H1 (cell line): ENCODE measurements at regions of chr12 and their contacts with region 1.

Region 1: GRCh38 chr12:26651566-26652188 is 181.3 kb downstream of the ITPR2 start:
- DNase-seq: peak; percentile 59 to 93
- H3K4me3 ChIP-seq: no peak overlapping the region
- H3K27ac ChIP-seq: no peak overlapping the region
- H3K4me1 ChIP-seq: peaks cover 0 to 1% (median 0%) of the 10 kb centered on the region in 4 experiments; a peak in 1 of 7 replicates
- H3K27me3 ChIP-seq: no peaks in the 10 kb centered on the region
- CTCF ChIP-seq: peak; percentile 14 to 85 (median 83)
- EP300 ChIP-seq: no peak
- POLR2A ChIP-seq: no peak
- RAD21 ChIP-seq: peak; percentile 92 to 95

Region 2: GRCh38 chr12:26623136-26623535 is 28.5 kb before region 1 on chr12:
- CTCF ChIA-PET with region 1: interaction called, 10 read pairs
- POLR2A ChIA-PET with region 1: no interaction called
- DNase-seq: no peak
- H3K4me3 ChIP-seq: no peak overlapping the region
- H3K27ac ChIP-seq: no peak overlapping the region
- H3K4me1 ChIP-seq: no peaks in the 10 kb centered on the region
- H3K27me3 ChIP-seq: no peaks in the 10 kb centered on the region
- CTCF ChIP-seq: no peak
- EP300 ChIP-seq: no peak
- POLR2A ChIP-seq: no peak
- RAD21 ChIP-seq: no peak